H1 (cell line): ENCODE measurements at regions of chr1 and their contacts with region 1.

Region 1: GRCh38 chr1:168145184-168146159 is 8.7 kb upstream of the GPR161 start:
- DNase-seq: peak; percentile 79 to 97
- H3K4me3 ChIP-seq: no peak overlapping the region; a peak in 1 of 8 replicates
- H3K27ac ChIP-seq: no peak overlapping the region
- H3K4me1 ChIP-seq: peaks cover 0 to 2% (median 0%) of the 10 kb centered on the region in 4 experiments; a peak in 1 of 7 replicates
- H3K27me3 ChIP-seq: no peaks in the 10 kb centered on the region
- CTCF ChIP-seq: peak; percentile 80 to 95 (median 88)
- EP300 ChIP-seq: no peak
- POLR2A ChIP-seq: no peak
- RAD21 ChIP-seq: peak; percentile 50 to 64

Region 2: GRCh38 chr1:167964646-167965045 is 180.8 kb before region 1 on chr1:
- CTCF ChIA-PET with region 1: no interaction called
- POLR2A ChIA-PET with region 1: no interaction called
- DNase-seq: no peak
- H3K4me3 ChIP-seq: no peak overlapping the region
- H3K27ac ChIP-seq: no peak overlapping the region
- H3K4me1 ChIP-seq: no peaks in the 10 kb centered on the region
- H3K27me3 ChIP-seq: no peaks in the 10 kb centered on the region
- CTCF ChIP-seq: no peak
- EP300 ChIP-seq: no peak
- POLR2A ChIP-seq: no peak
- RAD21 ChIP-seq: no peak

Region 3: GRCh38 chr1:168092566-168093355 is 52.7 kb before region 1 on chr1:
- CTCF ChIA-PET with region 1: interaction called, 14 read pairs
- POLR2A ChIA-PET with region 1: no interaction called
- DNase-seq: no peak
- H3K4me3 ChIP-seq: no peak overlapping the region
- H3K27ac ChIP-seq: no peak overlapping the region
- H3K4me1 ChIP-seq: peaks cover 0 to 3% (median 0%) of the 10 kb centered on the region in 4 experiments; a peak in 1 of 7 replicates
- H3K27me3 ChIP-seq: no peaks in the 10 kb centered on the region
- CTCF ChIP-seq: peak; percentile 55 to 67 (median 57)
- EP300 ChIP-seq: no peak
- POLR2A ChIP-seq: no peak
- RAD21 ChIP-seq: peak; percentile 73 to 77

Region 4: GRCh38 chr1:168167806-168168205 is 22.3 kb after region 1 on chr1:
- CTCF ChIA-PET with region 1: interaction called, 10 read pairs
- POLR2A ChIA-PET with region 1: no interaction called
- DNase-seq: no peak
- H3K4me3 ChIP-seq: no peak overlapping the region
- H3K27ac ChIP-seq: no peak overlapping the region
- H3K4me1 ChIP-seq: no peaks in the 10 kb centered on the region
- H3K27me3 ChIP-seq: no peaks in the 10 kb centered on the region
- CTCF ChIP-seq: no peak
- EP300 ChIP-seq: no peak
- POLR2A ChIP-seq: no peak
- RAD21 ChIP-seq: no peak